HEK293T (cell line): ENCODE measurements at regions of chr1 and their contacts with region 1.

Region 1: DNA sequence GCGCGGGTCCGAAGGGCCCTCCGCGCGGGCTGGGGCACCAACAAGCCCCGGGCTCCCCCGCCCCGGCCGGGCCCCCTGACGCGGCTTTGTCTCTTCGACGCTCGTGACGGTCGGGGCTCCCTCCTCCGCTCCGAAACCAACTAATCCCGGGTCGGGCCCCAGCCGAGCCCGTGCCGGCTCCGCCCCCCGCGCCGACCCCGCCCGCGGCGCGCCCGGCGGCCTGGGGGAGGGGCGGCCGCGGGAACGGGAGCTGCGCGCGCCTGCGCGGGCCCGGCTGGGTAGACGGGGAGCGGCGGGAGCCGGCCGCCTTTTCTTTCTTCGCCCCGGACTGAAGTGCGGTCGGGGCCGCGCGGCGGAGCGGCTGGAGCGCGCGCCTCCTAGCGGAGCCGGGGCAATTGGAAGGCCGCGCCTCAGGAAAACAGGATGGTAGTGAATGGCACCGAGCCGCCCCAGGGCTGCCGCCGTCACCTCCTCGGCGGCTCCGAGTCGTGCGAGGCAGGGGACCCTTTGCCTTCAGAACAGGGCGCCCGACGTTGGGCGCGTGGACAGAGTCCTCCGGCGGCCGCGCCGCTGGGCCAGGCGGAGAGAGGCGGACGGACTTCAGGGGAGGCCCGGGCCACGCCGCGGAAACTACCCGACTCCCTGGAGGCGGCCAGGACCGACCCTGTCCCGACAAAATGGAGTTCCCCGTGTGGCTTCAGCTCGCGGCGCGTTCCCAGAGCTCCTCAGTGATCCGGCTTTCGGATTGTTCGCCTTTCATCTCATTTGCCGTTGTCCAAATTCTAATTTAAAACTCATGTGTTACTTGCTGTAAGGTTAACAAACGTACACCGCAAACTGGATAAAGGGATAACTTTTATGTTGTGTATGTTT is at the start of gene TP53BP2:
- DNase-seq: peak; percentile 95

Region 2: DNA sequence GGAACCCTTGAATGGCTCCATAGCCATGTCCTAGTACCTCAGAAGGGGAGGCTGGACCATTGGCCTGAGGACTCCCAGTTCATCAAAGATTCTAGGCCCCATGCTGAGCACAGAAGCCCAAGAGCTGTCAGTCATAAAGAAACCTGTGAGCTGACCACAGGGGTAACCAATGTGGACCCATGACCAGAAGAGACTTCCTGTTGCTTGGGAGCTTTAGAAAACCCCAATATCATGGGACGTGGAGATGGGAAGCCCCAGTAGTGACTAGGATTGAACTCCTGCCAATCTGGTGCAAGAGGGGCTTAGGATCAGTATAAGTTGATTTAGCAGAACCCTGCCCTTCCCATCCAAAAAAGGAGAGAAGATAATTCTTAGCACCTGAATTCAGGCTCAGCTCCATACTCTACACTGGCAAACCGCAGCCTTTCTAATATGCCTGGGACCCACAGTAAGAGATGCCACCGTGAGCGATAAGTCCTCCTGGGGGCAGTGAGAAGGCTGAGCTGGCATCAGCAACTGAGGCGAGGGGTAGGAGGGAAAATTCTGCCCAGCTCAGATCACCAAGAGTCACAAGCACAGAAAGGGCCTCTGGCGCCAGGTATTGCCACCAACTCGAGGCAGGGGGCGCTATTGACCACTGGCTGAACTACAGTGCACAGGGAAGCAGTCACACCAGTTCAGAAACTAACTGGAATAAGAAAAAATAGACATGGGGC is 289.5 kb before region 1 on chr1:
- CTCF ChIA-PET with region 1: no interaction called
- POLR2A ChIA-PET with region 1: no interaction called
- DNase-seq: peak; percentile 81

Region 3: DNA sequence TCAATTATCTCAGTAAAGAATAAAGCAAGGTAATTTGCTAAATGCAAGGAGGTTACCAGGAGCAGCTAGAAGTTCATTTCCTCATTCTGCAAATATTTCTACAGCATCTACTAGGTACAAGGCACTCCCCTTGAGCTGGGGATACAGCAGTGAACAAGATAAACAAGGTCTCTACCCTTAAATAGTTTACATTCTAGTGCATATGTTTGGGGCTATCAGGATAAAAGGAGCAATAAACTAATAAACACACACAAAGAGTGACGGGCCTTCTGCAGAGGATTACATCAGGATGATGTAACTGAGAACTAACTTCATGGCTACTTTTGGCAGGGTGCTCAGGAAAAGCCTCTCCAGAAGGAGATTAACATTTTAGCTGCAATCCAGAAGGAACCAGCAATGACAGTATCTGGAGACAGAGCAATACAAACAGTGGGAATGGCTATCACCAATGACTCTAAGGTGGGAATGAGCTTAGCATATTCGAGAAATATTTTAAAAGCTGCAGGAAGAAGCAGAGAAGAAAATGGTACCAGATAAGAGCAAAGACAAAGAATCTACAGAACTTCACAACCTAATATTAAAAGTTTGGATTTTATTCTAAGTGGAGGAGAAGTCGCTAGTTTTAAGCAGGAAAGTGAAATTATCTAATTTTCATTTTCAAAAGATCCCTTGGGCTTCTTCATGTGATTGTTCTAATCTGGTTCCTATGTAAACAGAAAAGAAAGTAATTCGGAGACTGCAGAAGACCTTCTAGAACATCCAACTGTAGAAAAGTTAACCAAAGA is 26.1 kb before region 1 on chr1:
- CTCF ChIA-PET with region 1: interaction called, 9 read pairs
- POLR2A ChIA-PET with region 1: interaction called, 20 read pairs
- DNase-seq: no peak

Region 4: GRCh38 chr1:223825767-223826748 is 20.0 kb before region 1 on chr1:
- CTCF ChIA-PET with region 1: interaction called, 3 read pairs
- POLR2A ChIA-PET with region 1: interaction called, 20 read pairs
- DNase-seq: no peak

Region 5: GRCh38 chr1:223834660-223835263 is 11.3 kb before region 1 on chr1:
- CTCF ChIA-PET with region 1: interaction called, 7 read pairs
- POLR2A ChIA-PET with region 1: interaction called, 21 read pairs
- DNase-seq: no peak

Region 6: GRCh38 chr1:223859058-223859457 is 13.0 kb after region 1 on chr1:
- CTCF ChIA-PET with region 1: interaction called, 3 read pairs
- POLR2A ChIA-PET with region 1: interaction called, 17 read pairs
- DNase-seq: no peak